ENCODE measurements at regions of chr12 and their contacts with region 1.

Region 1: DNA sequence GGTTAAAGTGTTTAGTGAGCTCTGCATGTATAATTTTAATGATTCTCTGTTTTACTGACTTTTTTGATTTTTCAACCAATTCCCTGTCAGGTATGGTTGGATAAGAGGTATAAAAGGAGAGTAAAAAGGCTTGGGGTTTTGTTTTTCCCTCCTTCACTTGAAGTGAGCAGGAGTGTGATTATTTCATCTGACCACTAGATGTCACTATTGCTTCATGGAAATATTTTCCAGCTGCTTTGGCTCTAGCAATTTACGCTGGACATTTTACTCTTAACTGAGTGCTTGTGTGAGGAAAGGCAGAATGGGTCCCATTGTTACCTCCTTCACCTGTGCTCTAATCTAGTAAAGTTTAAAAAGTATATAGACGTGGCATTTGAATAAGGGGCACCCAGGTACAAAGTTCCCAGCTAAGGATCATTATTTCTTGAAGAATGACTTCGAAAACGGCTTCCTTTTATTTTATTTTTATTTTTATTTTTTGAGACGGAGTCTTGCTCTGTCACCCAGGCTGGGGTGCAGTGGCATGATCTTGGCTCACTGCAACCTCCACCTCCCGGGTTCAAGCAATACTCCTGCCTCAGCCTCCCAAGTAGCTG is 66.5 kb downstream of the TBC1D30 start:
- DNase-seq: peak; percentile 33
- H3K4me3 ChIP-seq: no peak overlapping the region
- H3K27ac ChIP-seq: no peak overlapping the region
- H3K4me1 ChIP-seq: no peaks in the 10 kb centered on the region
- H3K27me3 ChIP-seq: peaks cover 9% of the 10 kb centered on the region
- CTCF ChIP-seq: peak; percentile 61 to 67

Region 2: DNA sequence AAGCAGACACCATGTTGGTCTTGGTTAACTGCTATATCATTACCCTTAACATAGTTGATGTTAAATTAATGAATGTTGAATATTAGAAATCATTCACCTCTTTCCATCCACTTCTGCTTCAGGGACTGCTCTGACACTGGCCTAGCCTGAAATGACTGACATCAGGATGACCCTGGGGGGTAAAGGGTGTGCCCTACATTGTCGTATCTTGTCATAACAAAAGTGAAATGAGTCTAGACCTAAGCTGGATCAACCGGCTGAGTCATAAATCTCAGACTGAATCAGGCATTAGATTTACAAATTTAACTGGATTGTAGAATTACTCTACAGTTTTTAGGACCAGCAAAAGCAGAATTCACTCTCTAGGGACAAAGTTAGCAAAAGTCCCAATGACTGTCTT is 704.2 kb before region 1 on chr12:
- CTCF ChIA-PET with region 1: no interaction called
- dilution Hi-C with region 1: no loop called
- in situ Hi-C with region 1: no loop called
- intact Hi-C with region 1: no loop called
- DNase-seq: peak; percentile 46
- H3K4me3 ChIP-seq: no peak overlapping the region
- H3K27ac ChIP-seq: peak overlapping the region; percentile 48
- H3K4me1 ChIP-seq: peaks cover 26% of the 10 kb centered on the region
- H3K27me3 ChIP-seq: no peaks in the 10 kb centered on the region
- CTCF ChIP-seq: no peak

Region 3: GRCh38 chr12:64801381-64801780 is 89.6 kb before region 1 on chr12:
- CTCF ChIA-PET with region 1: no interaction called
- dilution Hi-C with region 1: no loop called
- in situ Hi-C with region 1: no loop called
- intact Hi-C with region 1: loop called (anchors 5 kb)
- DNase-seq: no peak
- H3K4me3 ChIP-seq: no peak overlapping the region
- H3K27ac ChIP-seq: no peak overlapping the region
- H3K4me1 ChIP-seq: no peaks in the 10 kb centered on the region
- H3K27me3 ChIP-seq: no peaks in the 10 kb centered on the region
- CTCF ChIP-seq: peak in 1 of 2 donors; percentile 52

Region 4: GRCh38 chr12:65074932-65075331 is 184.0 kb after region 1 on chr12:
- CTCF ChIA-PET with region 1: no interaction called
- dilution Hi-C with region 1: no loop called
- in situ Hi-C with region 1: no loop called
- intact Hi-C with region 1: no loop called
- DNase-seq: no peak
- H3K4me3 ChIP-seq: no peak overlapping the region
- H3K27ac ChIP-seq: no peak overlapping the region
- H3K4me1 ChIP-seq: no peaks in the 10 kb centered on the region
- H3K27me3 ChIP-seq: peaks cover 16% of the 10 kb centered on the region
- CTCF ChIP-seq: peak in 1 of 2 donors; percentile 21

Region 5: GRCh38 chr12:65100140-65100539 is 209.2 kb after region 1 on chr12:
- CTCF ChIA-PET with region 1: no interaction called
- dilution Hi-C with region 1: no loop called
- in situ Hi-C with region 1: loop called in 1 of 2 experiments (anchors 5 kb)
- intact Hi-C with region 1: loop called (anchors 1 kb)
- DNase-seq: no peak
- H3K4me3 ChIP-seq: no peak overlapping the region
- H3K27ac ChIP-seq: no peak overlapping the region
- H3K4me1 ChIP-seq: no peaks in the 10 kb centered on the region
- H3K27me3 ChIP-seq: peaks cover 7% of the 10 kb centered on the region
- CTCF ChIP-seq: peak; percentile 20 to 44

Region 6: DNA sequence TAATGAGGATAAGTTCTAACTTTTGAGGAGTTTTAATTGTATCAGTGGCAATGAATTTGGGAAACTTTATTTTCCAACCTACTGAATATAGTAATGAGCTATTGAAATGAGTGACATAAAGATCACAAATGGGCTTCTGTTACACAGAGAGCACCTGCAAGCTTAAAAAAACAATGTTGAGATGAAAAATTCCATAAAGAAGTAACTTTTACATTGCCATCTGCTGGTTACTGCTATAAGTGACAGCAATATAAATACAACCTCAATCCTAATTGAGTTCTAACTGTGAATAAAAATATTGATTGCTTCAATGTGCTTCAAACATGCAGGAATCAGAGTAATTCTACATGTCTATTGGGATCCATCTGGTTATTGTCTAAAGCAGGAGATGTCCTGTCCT is 216.0 kb after region 1 on chr12:
- CTCF ChIA-PET with region 1: interaction called, 5 read pairs
- dilution Hi-C with region 1: no loop called
- in situ Hi-C with region 1: loop called in 1 of 2 experiments (anchors 5 kb)
- intact Hi-C with region 1: loop called (anchors 1 kb)
- DNase-seq: no peak
- H3K4me3 ChIP-seq: no peak overlapping the region
- H3K27ac ChIP-seq: no peak overlapping the region
- H3K4me1 ChIP-seq: no peaks in the 10 kb centered on the region
- H3K27me3 ChIP-seq: peaks cover 4% of the 10 kb centered on the region
- CTCF ChIP-seq: peak; percentile 32 to 54

Region 7: DNA sequence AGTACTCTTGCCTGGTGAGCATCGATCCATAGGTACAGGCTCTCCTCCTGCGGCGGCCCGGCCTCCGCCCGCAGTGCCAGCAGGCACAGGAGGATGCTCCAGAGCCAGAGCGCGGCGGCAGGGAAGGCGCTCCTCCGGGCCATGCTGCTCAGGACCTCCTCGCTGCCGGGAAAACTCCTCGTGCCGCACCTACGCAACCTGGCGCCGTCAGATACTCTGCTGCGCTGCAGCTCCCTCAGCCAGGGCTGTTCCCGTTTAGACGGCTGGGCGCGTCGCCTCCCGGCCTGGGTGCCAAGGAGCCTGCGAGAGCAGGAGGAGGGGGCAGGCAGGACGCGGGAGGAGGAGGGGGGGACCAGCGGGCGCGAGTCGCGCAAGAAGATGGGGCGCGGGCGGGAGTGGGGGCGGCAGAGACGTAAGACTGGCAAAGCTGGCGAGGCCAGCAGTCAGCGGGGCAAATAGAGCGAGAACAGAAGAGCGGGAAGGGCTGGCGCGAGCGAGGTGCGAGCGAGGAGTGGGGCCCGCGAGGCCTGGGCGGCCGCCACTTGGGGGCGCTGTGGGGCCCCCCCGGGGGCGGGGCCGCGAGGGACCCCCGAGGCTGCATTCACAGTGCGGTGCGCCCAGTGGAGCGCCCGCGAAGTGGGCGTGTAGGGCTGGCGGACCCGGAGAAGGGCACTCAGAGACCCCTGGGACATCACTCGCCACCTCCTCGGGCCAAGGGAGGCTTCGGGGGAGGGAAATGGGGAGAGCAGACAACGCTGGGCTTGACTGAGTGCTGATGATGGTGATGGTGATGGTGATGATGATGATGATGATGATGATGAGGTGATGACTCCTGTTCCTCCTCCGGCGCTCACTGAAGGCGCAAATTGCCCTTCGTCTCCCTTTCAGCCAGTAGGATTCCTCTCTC is 230.3 kb after region 1 on chr12 and contains the start of gene WIF1:
- CTCF ChIA-PET with region 1: no interaction called
- dilution Hi-C with region 1: no loop called
- in situ Hi-C with region 1: loop called in 1 of 2 experiments (anchors 5 kb)
- intact Hi-C with region 1: loop called (anchors 1 kb)
- DNase-seq: peak; percentile 37
- H3K4me3 ChIP-seq: peak within 1 kb of the TSS in 2 of 3 experiments; percentile 28 to 33
- H3K27ac ChIP-seq: no peak within 1 kb of the TSS
- H3K4me1 ChIP-seq: peaks cover 10% of the 10 kb centered on the region
- H3K27me3 ChIP-seq: peaks cover 21% of the 10 kb centered on the region
- CTCF ChIP-seq: peak; percentile 11 to 13
- total RNA-seq, gene WIF1: not detected

Region 8: GRCh38 chr12:65232476-65233077 is 341.6 kb after region 1 on chr12:
- CTCF ChIA-PET with region 1: interaction called, 4 read pairs
- dilution Hi-C with region 1: no loop called
- in situ Hi-C with region 1: loop called in 1 of 2 experiments (anchors 25 kb)
- intact Hi-C with region 1: loop called (anchors 1 kb)
- DNase-seq: peak; percentile 11
- H3K4me3 ChIP-seq: no peak overlapping the region
- H3K27ac ChIP-seq: no peak overlapping the region
- H3K4me1 ChIP-seq: peaks cover 5% of the 10 kb centered on the region
- H3K27me3 ChIP-seq: no peaks in the 10 kb centered on the region
- CTCF ChIP-seq: peak; percentile 29 to 43

Region 9: GRCh38 chr12:66107451-66107915 is 1216.5 kb after region 1 on chr12:
- CTCF ChIA-PET with region 1: no interaction called
- dilution Hi-C with region 1: no loop called
- in situ Hi-C with region 1: no loop called
- intact Hi-C with region 1: loop called (anchors 2 kb)
- DNase-seq: peak; percentile 91
- H3K4me3 ChIP-seq: no peak overlapping the region
- H3K27ac ChIP-seq: no peak overlapping the region
- H3K4me1 ChIP-seq: peaks cover 6% of the 10 kb centered on the region
- H3K27me3 ChIP-seq: no peaks in the 10 kb centered on the region
- CTCF ChIP-seq: peak; percentile 69 to 75